ENCODE measurements at regions of chr16 and their contacts with region 1.

Region 1: DNA sequence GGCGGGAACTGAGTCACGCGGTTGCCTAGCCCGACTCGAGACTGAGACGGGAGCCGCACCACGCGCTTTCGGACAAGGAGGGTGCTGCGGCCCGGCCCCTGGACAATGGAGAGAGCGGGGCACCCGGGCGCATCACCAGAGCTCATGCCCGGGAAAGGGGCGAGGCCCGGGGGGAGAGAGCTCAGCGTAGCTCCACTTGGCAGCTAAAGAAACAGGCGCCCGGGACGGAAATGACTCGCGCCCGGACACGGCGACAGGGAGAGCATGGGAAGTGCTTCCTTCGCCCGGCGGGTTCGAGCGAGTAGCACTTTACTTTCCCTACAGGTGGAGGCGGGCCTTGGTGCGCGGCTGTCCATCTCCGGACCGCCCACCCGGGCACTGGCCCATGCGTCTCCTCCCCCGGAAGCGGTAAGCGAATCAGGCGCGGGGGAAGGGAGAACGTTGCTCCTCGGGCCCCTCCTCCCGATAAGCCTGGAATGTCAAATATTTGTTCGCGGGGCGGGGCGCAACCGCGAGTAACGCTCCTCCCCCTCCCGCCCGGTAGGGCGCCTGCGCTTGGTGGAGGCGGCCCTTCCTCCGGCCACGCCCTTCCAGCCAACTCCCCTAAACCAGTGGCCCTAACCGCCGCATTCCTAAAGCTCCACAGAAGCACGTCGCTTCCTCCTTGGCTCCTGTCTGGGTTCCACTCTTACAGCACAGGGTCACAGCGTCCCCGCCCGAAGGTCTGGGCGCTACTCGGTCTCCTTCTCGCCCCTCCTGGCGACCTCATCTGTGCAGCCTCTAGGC is 1.5 kb upstream of the ESRP2 start:
- DNase-seq: peak; percentile 100
- H3K4me3 ChIP-seq: peak overlapping the region; percentile 79
- H3K4me3 Mint-ChIP-seq: peak overlapping the region; percentile 81
- H3K27ac Mint-ChIP-seq: peak overlapping the region; percentile 98
- H3K4me1 ChIP-seq: peaks cover 18% of the 10 kb centered on the region
- H3K4me1 Mint-ChIP-seq: peaks cover 19% of the 10 kb centered on the region
- H3K27me3 ChIP-seq: no peaks in the 10 kb centered on the region
- H3K27me3 Mint-ChIP-seq: no peaks in the 10 kb centered on the region
- CTCF ChIP-seq: no peak

Region 2: DNA sequence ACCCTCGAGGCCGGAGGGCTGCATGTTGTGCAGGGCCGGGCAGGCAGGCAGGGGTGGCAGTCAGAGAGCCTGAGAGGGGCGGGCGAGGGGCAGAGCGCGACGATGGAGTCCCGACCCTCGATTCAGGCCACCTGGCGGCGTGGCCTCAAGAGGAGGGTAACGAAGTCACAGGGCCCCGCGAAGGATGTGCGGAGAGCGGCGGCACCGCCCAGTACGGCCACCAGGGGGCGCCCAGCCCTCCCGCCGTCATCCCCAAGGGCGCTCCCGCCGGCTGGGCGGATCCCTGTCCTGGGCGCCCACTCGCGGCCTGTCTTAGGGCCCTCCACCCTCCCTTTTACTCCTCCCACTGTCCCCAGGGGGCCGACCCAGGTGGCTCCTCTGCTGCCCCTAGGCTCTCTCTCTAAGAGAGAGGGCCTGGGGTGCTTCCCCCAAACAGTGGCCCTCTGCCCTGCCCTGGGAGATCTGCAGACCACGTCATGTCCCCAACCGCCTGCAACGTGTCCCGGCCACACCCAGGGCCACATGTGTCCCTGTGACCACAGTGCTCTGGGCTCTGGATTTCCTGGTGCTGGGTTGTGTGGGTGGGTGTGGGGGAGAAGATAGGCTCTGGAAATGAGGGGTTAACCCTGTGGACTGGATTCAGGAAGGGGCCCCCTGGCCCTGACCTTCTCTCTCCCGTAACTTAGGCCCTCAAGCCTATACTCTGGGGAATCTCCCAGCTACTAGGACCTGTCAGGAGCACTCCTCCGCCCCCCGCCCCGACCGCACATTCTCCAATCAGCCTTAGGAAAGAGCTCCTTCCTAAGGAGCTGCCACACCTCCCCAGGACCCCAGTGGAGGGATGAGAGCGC is 244.0 kb before region 1 on chr16:
- CTCF ChIA-PET with region 1: no interaction called
- POLR2A ChIA-PET with region 1: no interaction called
- intact Hi-C with region 1: loop called (anchors 2 kb)
- DNase-seq: peak; percentile 80 to 86
- H3K4me3 ChIP-seq: no peak overlapping the region
- H3K4me3 Mint-ChIP-seq: peak overlapping the region; percentile 37
- H3K27ac Mint-ChIP-seq: no peak overlapping the region
- H3K4me1 ChIP-seq: peaks cover 7% of the 10 kb centered on the region
- H3K4me1 Mint-ChIP-seq: no peaks in the 10 kb centered on the region
- H3K27me3 ChIP-seq: no peaks in the 10 kb centered on the region
- H3K27me3 Mint-ChIP-seq: no peaks in the 10 kb centered on the region
- CTCF ChIP-seq: peak; percentile 95

Region 3: DNA sequence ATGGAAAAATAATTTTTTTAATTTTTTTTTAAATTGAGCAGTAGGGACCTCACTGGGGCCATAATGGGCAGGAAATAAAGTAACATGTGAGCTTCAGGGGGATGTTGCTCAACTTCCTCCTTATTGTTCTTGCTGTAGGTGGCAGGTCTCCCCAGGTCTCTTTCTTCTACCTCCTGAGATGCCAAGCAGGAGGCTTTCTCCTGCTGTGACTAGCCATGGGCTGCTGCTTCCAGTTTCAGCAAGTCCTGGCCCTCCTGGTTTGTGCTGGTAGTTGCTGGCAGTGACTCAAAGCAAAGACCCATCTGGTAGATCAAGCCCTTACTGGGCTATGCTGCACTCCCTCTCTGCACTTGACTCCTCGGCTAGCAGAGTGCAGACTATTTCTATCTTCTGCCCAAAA is 224.0 kb before region 1 on chr16:
- CTCF ChIA-PET with region 1: no interaction called
- POLR2A ChIA-PET with region 1: no interaction called
- intact Hi-C with region 1: no loop called
- DNase-seq: no peak
- H3K4me3 ChIP-seq: no peak overlapping the region
- H3K4me3 Mint-ChIP-seq: no peak overlapping the region
- H3K27ac Mint-ChIP-seq: no peak overlapping the region
- H3K4me1 ChIP-seq: no peaks in the 10 kb centered on the region
- H3K4me1 Mint-ChIP-seq: no peaks in the 10 kb centered on the region
- H3K27me3 ChIP-seq: no peaks in the 10 kb centered on the region
- H3K27me3 Mint-ChIP-seq: peaks cover 6% of the 10 kb centered on the region
- CTCF ChIP-seq: no peak

Region 4: GRCh38 chr16:68085259-68086071 is 152.0 kb before region 1 on chr16 and contains the start of gene NFATC3:
- CTCF ChIA-PET with region 1: interaction called, 10 read pairs
- POLR2A ChIA-PET with region 1: interaction called, 27 read pairs
- intact Hi-C with region 1: loop called (anchors 1 kb)
- DNase-seq: peak; percentile 99
- H3K4me3 ChIP-seq: peak within 1 kb of the TSS; percentile 87
- H3K4me3 Mint-ChIP-seq: peak within 1 kb of the TSS; percentile 71
- H3K27ac Mint-ChIP-seq: peak within 1 kb of the TSS; percentile 83
- H3K4me1 ChIP-seq: peaks cover 28% of the 10 kb centered on the region
- H3K4me1 Mint-ChIP-seq: peaks cover 38% of the 10 kb centered on the region
- H3K27me3 ChIP-seq: no peaks in the 10 kb centered on the region
- H3K27me3 Mint-ChIP-seq: no peaks in the 10 kb centered on the region
- CTCF ChIP-seq: no peak
- total RNA-seq, gene NFATC3: 40.0 and 43.9 TPM in 2 replicates

Region 5: DNA sequence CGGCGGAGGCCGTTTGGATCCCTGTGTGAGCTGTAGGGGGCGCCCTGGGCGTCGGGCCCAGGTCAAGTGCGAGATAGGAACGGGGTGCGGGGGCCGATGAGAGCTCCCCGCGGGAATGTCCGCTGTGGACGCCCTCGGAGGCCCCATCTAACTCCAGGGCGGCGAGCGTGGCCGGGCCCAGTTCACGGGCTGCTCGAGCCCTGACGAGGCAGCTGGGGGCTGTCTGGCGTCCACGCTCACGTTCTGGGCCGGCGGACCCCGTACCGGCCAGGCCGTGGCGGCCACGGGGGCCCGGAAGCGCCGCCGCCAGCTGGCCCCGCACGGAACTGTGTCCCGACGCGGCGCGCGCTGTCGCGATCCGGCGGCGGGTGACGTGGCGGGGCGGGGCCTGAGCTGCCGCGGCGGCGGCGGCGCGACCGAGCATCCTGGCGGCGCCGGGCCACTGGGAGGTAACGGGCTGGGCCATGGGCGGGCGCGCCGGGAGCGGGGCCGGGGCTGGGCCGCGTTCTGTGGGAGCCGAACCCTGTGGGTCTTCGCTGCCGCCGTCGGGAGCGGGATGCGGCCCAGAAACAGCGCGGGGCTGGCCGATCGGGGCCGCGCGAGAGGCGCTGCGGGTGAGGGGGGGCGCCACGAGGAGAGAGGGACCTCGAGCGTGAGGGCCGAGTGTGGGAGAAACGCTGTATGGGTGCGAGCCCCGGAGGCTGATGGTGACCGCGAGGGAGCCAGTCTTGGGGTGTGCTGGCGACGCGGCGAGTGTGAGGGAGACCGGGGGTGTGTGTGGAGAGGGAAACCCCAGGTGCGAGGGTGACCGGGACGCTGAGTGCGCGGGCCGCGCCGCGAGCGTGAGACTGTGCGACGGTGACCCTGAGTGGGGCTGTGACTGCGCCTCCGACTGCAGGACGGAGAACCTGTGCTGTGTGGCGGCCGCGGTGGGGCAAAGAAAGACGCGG is 27.0 kb after region 1 on chr16 and contains the start of gene SLC7A6:
- CTCF ChIA-PET with region 1: interaction called, 20 read pairs
- POLR2A ChIA-PET with region 1: interaction called, 59 read pairs
- intact Hi-C with region 1: loop called (anchors 1 kb)
- DNase-seq: peak; percentile 85 to 90
- H3K4me3 ChIP-seq: peak within 1 kb of the TSS; percentile 94
- H3K4me3 Mint-ChIP-seq: peak within 1 kb of the TSS; percentile 91
- H3K27ac Mint-ChIP-seq: peak within 1 kb of the TSS; percentile 98
- H3K4me1 ChIP-seq: peaks cover 44% of the 10 kb centered on the region
- H3K4me1 Mint-ChIP-seq: peaks cover 31% of the 10 kb centered on the region
- H3K27me3 ChIP-seq: no peaks in the 10 kb centered on the region
- H3K27me3 Mint-ChIP-seq: no peaks in the 10 kb centered on the region
- CTCF ChIP-seq: peak; percentile 77 to 79
- total RNA-seq, gene SLC7A6: 236 and 267 TPM in 2 replicates

Region 6: DNA sequence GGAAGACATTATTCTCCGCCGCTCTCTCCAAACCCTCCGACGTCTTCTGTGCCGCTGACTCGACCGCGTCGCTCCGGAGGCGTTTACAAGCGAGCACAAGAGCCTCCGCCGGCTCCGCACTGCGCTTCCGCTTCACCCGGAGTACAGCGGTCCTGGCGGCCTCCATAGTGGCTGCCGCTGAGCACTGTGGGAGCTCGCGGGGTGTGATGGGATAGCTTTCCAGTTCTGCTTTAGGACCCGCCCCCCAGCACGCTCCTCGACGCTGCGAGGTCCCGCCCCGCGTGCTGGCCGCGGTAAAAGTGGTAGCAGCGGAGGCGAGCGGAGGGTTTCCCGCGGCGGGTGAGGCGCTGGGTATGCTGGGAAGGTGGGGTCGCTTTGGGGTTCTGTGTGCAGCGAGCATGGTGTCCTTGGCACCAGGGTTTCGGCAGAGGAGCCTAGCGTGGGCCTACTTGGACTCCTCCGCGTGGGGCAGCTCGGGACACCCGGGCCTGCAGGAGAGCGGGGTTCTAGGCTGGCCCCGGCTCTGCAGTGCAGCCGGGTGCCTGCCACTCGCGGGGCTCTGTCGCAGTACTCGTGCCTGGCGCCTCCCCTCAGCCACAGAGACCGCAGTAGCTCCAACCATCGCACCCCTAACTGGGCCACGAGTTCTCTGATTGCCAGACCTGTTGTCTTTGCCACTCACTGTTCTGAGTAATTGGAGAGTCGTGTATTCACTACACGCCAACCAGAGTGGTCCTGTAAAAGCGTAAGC is 73.5 kb after region 1 on chr16 and contains the starts of genes PRMT7 and SLC7A6OS:
- CTCF ChIA-PET with region 1: interaction called, 4 read pairs
- POLR2A ChIA-PET with region 1: interaction called, 15 read pairs
- intact Hi-C with region 1: no loop called
- DNase-seq: peak; percentile 93 to 95
- H3K4me3 ChIP-seq: peak within 1 kb of the TSS; percentile 65
- H3K4me3 Mint-ChIP-seq: peak within 1 kb of the TSS; percentile 77
- H3K27ac Mint-ChIP-seq: peak within 1 kb of the TSS; percentile 89
- H3K4me1 ChIP-seq: peaks cover 35% of the 10 kb centered on the region
- H3K4me1 Mint-ChIP-seq: peaks cover 39% of the 10 kb centered on the region
- H3K27me3 ChIP-seq: no peaks in the 10 kb centered on the region
- H3K27me3 Mint-ChIP-seq: no peaks in the 10 kb centered on the region
- CTCF ChIP-seq: peak in 1 of 2 experiments; percentile 52
- total RNA-seq, gene PRMT7: 156 and 166 TPM in 2 replicates
- total RNA-seq, gene SLC7A6OS: 34.0 and 34.2 TPM in 2 replicates

Measured in Caco-2 (cell line).